IMR-90 (cell line): ENCODE measurements at regions of chr4 and their contacts with region 1.

Region 1: GRCh38 chr4:98359646-98360045 is 98.5 kb downstream of the RAP1GDS1 start:
- DNase-seq: no peak
- ATAC-seq: no peak
- H3K4me3 ChIP-seq: no peak overlapping the region
- H3K27ac ChIP-seq: no peak overlapping the region
- H3K4me1 ChIP-seq: no peaks in the 10 kb centered on the region
- H3K27me3 ChIP-seq: no peaks in the 10 kb centered on the region
- CTCF ChIP-seq: no peak
- POLR2A ChIP-seq: no peak
- RAD21 ChIP-seq: no peak

Region 2: GRCh38 chr4:97587912-97588311 is 771.7 kb before region 1 on chr4:
- CTCF ChIA-PET with region 1: no interaction called
- POLR2A ChIA-PET with region 1: no interaction called
- dilution Hi-C with region 1: no loop called
- in situ Hi-C with region 1: no loop called
- intact Hi-C with region 1: no loop called
- DNase-seq: no peak
- ATAC-seq: no peak
- H3K4me3 ChIP-seq: no peak overlapping the region
- H3K27ac ChIP-seq: no peak overlapping the region
- H3K4me1 ChIP-seq: no peaks in the 10 kb centered on the region
- H3K27me3 ChIP-seq: no peaks in the 10 kb centered on the region
- CTCF ChIP-seq: no peak
- POLR2A ChIP-seq: no peak
- RAD21 ChIP-seq: no peak

Region 3: GRCh38 chr4:98374643-98375042 is 15.0 kb after region 1 on chr4:
- CTCF ChIA-PET with region 1: no interaction called
- POLR2A ChIA-PET with region 1: no interaction called
- dilution Hi-C with region 1: no loop called
- in situ Hi-C with region 1: no loop called
- intact Hi-C with region 1: loop called (anchors 2 kb)
- DNase-seq: peak; percentile 62
- ATAC-seq: peak; percentile 52
- H3K4me3 ChIP-seq: no peak overlapping the region
- H3K27ac ChIP-seq: no peak overlapping the region
- H3K4me1 ChIP-seq: peaks cover 2% of the 10 kb centered on the region; the same call in 1 of the 2 replicates
- H3K27me3 ChIP-seq: no peaks in the 10 kb centered on the region
- CTCF ChIP-seq: no peak
- POLR2A ChIP-seq: no peak
- RAD21 ChIP-seq: no peak